ENCODE measurements at regions of chr15 and their contacts with region 1.

Region 1: DNA sequence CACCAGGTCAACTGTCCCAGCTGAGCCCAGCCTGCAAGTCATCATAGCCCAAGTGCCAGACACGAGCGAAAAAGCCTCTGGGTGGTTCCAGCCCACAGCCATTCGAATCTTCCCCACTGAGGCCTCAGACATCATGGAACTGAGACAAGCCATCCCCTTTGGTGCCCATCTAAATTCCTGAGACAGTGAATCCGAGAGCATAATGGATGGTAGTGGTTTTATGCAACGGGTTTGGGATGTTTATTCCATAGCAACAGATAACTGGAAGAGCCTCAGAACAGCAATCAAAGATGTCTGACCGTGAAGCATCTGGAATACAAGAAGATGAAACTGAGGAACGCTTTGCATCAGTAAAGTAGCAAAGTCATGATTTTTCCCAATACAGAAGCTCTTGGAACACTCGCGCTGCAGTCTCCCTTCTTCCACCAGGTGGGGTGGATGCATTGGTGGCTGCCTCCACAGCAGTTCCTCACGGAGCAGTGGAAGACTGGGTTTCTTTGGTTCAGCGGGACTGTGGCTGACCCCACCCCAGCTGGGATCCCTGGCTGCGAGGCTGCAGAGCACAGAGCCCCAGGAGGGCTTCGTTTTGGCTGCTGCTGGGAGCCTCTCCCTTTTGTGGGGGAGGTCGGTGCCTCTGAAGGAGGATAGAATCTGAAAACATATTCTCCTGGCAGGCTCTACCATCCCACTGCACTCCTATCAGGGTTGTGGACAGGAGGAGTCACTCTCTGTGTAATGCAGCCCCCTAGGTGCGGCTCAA is 26.4 kb upstream of the PDE8A start:
- DNase-seq: peak; percentile 53
- H3K4me3 ChIP-seq: peak overlapping the region in 1 of 3 experiments; percentile 29
- H3K27ac ChIP-seq: no peak overlapping the region
- H3K4me1 ChIP-seq: peaks cover 4% of the 10 kb centered on the region
- H3K27me3 ChIP-seq: no peaks in the 10 kb centered on the region
- CTCF ChIP-seq: peak; percentile 90 to 96

Region 2: GRCh38 chr15:84840741-84841429 is 114.4 kb before region 1 on chr15:
- CTCF ChIA-PET with region 1: no interaction called
- dilution Hi-C with region 1: loop called (anchors 5 kb)
- in situ Hi-C with region 1: no loop called
- intact Hi-C with region 1: no loop called
- DNase-seq: peak; percentile 12
- H3K4me3 ChIP-seq: no peak overlapping the region
- H3K27ac ChIP-seq: no peak overlapping the region
- H3K4me1 ChIP-seq: no peaks in the 10 kb centered on the region
- H3K27me3 ChIP-seq: no peaks in the 10 kb centered on the region
- CTCF ChIP-seq: no peak

Region 3: DNA sequence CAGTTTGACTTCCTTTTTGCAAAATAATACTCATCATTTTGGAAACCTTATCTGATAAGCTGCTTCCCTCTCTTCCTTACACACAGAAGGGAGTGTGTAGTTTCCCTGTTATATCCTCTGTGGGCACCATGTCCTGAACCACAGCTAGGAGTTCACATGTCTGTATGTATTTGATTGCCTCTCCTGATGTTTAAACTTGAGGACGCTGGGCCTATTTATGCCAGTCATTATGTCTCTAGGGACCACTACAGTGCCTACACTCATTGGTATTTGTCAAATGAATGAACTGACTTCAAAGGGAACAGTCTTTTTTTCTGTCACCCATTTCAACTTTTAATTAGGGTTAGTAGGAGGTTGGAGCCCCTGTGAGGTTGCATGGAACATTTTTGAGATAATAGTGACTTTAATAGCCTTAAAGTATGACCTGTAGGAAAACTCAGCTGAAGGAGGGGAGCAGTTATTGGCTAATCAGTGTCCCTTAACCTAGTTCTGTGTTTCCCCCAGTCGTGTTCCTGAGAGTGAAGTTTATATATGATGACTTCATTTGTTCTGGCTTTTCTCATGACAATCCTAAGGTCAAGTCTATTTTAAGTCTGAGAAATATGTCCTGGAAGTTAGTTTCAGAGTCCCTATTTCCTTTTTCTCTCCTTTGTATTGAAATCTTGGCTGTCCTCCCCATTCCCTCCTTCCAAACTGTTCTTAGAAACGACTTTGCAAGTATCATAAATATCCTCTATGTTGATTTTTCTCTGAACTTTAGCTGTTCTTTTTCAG is 55.3 kb after region 1 on chr15:
- CTCF ChIA-PET with region 1: interaction called, 15 read pairs
- dilution Hi-C with region 1: no loop called
- in situ Hi-C with region 1: no loop called
- intact Hi-C with region 1: loop called (anchors 1 kb)
- DNase-seq: no peak
- H3K4me3 ChIP-seq: no peak overlapping the region
- H3K27ac ChIP-seq: no peak overlapping the region
- H3K4me1 ChIP-seq: no peaks in the 10 kb centered on the region
- H3K27me3 ChIP-seq: no peaks in the 10 kb centered on the region
- CTCF ChIP-seq: no peak

Region 4: DNA sequence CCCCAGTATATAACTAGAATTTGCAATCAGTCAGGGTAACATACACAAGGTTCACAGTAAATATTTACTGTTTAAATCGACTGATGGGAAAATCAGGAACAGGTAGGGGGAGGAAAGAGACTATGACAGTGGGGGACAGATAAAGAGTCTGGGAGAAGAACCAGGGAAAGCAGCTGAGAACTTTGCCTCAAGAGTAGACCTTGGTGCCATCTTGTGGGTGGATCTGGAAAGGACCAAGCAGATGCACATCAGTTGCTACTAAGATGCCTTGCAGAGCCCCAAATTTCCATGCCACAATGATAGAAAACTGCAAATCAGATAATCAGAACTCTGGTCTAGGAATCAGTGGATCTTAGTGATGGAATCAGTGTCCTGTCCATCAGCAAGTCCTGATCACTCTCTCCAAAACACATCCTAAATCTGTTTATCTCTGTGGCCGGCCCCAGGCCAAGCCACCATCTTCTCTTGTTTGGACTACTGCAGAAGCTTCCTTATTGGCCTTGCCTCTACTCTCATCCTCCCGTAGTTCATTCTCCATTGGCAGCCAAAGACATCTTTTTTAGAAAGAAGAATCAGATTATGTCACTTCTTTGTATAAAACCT is 89.1 kb after region 1 on chr15:
- CTCF ChIA-PET with region 1: no interaction called
- dilution Hi-C with region 1: loop called (anchors 5 kb)
- in situ Hi-C with region 1: loop called (anchors 5 kb)
- intact Hi-C with region 1: loop called (anchors 1 kb)
- DNase-seq: peak; percentile 40
- H3K4me3 ChIP-seq: no peak overlapping the region
- H3K27ac ChIP-seq: no peak overlapping the region
- H3K4me1 ChIP-seq: no peaks in the 10 kb centered on the region
- H3K27me3 ChIP-seq: no peaks in the 10 kb centered on the region
- CTCF ChIP-seq: peak; percentile 67 to 76

Region 5: GRCh38 chr15:85168642-85169173 is 213.4 kb after region 1 on chr15:
- CTCF ChIA-PET with region 1: interaction called, 5 read pairs
- dilution Hi-C with region 1: no loop called
- in situ Hi-C with region 1: no loop called
- intact Hi-C with region 1: loop called (anchors 2 kb)
- DNase-seq: peak; percentile 71
- H3K4me3 ChIP-seq: peak overlapping the region; percentile 28 to 54 (median 51)
- H3K27ac ChIP-seq: no peak overlapping the region
- H3K4me1 ChIP-seq: no peaks in the 10 kb centered on the region
- H3K27me3 ChIP-seq: no peaks in the 10 kb centered on the region
- CTCF ChIP-seq: peak; percentile 69 to 74

Region 6: GRCh38 chr15:85289677-85290365 is 334.6 kb after region 1 on chr15:
- CTCF ChIA-PET with region 1: no interaction called
- dilution Hi-C with region 1: no loop called
- in situ Hi-C with region 1: no loop called
- intact Hi-C with region 1: loop called (anchors 5 kb)
- DNase-seq: peak; percentile 64
- H3K4me3 ChIP-seq: no peak overlapping the region
- H3K27ac ChIP-seq: no peak overlapping the region
- H3K4me1 ChIP-seq: peaks cover 7% of the 10 kb centered on the region
- H3K27me3 ChIP-seq: no peaks in the 10 kb centered on the region
- CTCF ChIP-seq: peak; percentile 72 to 74

Region 7: GRCh38 chr15:85354461-85354860 is 399.2 kb after region 1 on chr15:
- CTCF ChIA-PET with region 1: interaction called, 23 read pairs
- dilution Hi-C with region 1: no loop called
- in situ Hi-C with region 1: no loop called
- intact Hi-C with region 1: no loop called
- DNase-seq: no peak
- H3K4me3 ChIP-seq: no peak overlapping the region
- H3K27ac ChIP-seq: no peak overlapping the region
- H3K4me1 ChIP-seq: peaks cover 27% of the 10 kb centered on the region
- H3K27me3 ChIP-seq: no peaks in the 10 kb centered on the region
- CTCF ChIP-seq: no peak

Measured in mammary epithelial cell (primary cell).